ENCODE measurements at regions of chr3 and their contacts with region 1.

Region 1: GRCh38 chr3:183099026-183099837 is at the start of gene MCCC1:
- DNase-seq: peak; percentile 99
- ATAC-seq: peak; percentile 99
- H3K4me3 Mint-ChIP-seq: peak within 1 kb of the TSS; percentile 91
- H3K27ac Mint-ChIP-seq: peak within 1 kb of the TSS; percentile 99
- H3K4me1 Mint-ChIP-seq: peaks cover 33% of the 10 kb centered on the region
- H3K27me3 Mint-ChIP-seq: no peaks in the 10 kb centered on the region
- total RNA-seq, gene MCCC1: 22.0 to 31.1 TPM

Region 2: GRCh38 chr3:182980204-182981037 is 118.8 kb before region 1 on chr3 and contains the start of gene DCUN1D1:
- CTCF ChIA-PET with region 1: no interaction called
- POLR2A ChIA-PET with region 1: interaction called, 4 read pairs
- intact Hi-C with region 1: loop called (anchors 1 kb)
- DNase-seq: peak; percentile 93
- ATAC-seq: peak; percentile 94
- H3K4me3 Mint-ChIP-seq: peak within 1 kb of the TSS; percentile 95
- H3K27ac Mint-ChIP-seq: peak within 1 kb of the TSS; percentile 92
- H3K4me1 Mint-ChIP-seq: peaks cover 25% of the 10 kb centered on the region
- H3K27me3 Mint-ChIP-seq: no peaks in the 10 kb centered on the region
- total RNA-seq, gene DCUN1D1: 40.0 to 52.9 TPM

Region 3: DNA sequence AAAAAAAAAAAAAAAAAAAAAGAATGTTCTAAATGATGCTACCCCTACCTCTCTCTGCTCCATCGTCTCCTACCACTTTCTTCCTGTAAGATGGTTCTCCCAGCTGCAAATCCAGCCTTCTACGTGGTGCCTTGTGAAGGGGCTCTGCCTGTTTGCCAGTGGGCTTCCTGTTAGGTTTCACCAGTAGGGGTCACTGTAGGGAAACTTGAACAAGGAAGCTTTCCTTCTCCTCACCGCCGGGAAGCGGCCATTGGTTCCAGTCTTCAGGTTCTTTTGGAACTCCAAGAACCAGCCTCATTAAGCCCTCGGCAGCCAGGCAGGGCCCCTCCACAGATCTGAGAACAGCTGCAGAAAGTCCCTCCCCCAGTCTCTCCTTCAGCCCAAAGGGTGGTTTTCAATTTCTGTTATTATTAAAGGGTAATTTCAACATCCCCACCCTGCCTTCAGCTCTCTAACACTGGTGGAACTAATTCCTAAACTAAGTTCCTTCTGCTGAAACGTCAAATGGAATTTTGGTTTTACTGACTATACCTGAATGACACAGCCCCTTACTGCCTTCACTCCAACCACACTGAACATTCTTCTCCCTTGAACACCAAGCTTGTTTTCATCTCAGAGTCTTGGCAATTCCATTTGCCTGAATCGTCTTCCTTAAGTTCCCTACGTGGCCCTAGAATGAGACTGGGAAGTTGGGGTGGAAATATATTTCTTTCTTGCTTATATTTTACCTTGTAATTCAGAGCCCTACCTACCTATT is 13.4 kb before region 1 on chr3:
- CTCF ChIA-PET with region 1: interaction called, 38 read pairs
- POLR2A ChIA-PET with region 1: interaction called, 8 read pairs
- intact Hi-C with region 1: no loop called
- DNase-seq: peak; percentile 22
- ATAC-seq: no peak
- H3K4me3 Mint-ChIP-seq: no peak overlapping the region
- H3K27ac Mint-ChIP-seq: no peak overlapping the region
- H3K4me1 Mint-ChIP-seq: no peaks in the 10 kb centered on the region
- H3K27me3 Mint-ChIP-seq: no peaks in the 10 kb centered on the region

Region 4: DNA sequence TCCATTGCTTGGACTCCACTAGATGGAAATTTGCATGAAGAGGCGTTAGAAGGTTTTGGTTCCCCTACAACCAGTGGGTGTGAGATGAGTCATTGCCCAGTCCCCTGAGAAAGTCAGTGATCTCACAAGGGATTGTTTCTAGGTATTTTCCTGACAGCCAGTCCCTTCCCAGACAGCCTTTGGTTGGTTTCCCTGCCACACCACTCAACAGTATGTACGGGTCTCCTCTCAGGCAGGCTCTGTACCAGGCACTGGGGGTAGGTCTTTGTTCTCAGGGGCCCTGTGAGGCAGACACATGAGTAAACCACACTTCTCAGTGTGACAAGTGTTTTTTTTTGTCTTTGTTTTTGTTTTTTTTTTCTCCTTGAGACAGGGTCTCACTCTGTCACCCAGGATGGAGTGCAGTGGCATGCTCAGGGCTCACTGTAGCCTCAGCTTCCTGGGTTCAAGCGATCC is 59.3 kb after region 1 on chr3:
- CTCF ChIA-PET with region 1: no interaction called
- POLR2A ChIA-PET with region 1: no interaction called
- intact Hi-C with region 1: loop called in 1 of 2 experiments (anchors 1 kb)
- DNase-seq: peak; percentile 68
- ATAC-seq: peak; percentile 64
- H3K4me3 Mint-ChIP-seq: no peak overlapping the region
- H3K27ac Mint-ChIP-seq: peak overlapping the region; percentile 62
- H3K4me1 Mint-ChIP-seq: peaks cover 34% of the 10 kb centered on the region
- H3K27me3 Mint-ChIP-seq: no peaks in the 10 kb centered on the region

Region 5: GRCh38 chr3:183427876-183428446 is 328.7 kb after region 1 on chr3:
- CTCF ChIA-PET with region 1: no interaction called
- POLR2A ChIA-PET with region 1: no interaction called
- intact Hi-C with region 1: loop called in 1 of 2 experiments (anchors 1 kb)
- DNase-seq: peak; percentile 57
- ATAC-seq: peak; percentile 21
- H3K4me3 Mint-ChIP-seq: peak overlapping the region; percentile 79
- H3K27ac Mint-ChIP-seq: no peak overlapping the region
- H3K4me1 Mint-ChIP-seq: peaks cover 43% of the 10 kb centered on the region
- H3K27me3 Mint-ChIP-seq: peaks cover 11% of the 10 kb centered on the region

Region 6: GRCh38 chr3:183697610-183698317 is 598.5 kb after region 1 on chr3 and contains the start of gene YEATS2:
- CTCF ChIA-PET with region 1: no interaction called
- POLR2A ChIA-PET with region 1: no interaction called
- intact Hi-C with region 1: loop called in 1 of 2 experiments (anchors 1 kb)
- DNase-seq: peak; percentile 91
- ATAC-seq: peak; percentile 81
- H3K4me3 Mint-ChIP-seq: peak within 1 kb of the TSS; percentile 91
- H3K27ac Mint-ChIP-seq: peak within 1 kb of the TSS; percentile 89
- H3K4me1 Mint-ChIP-seq: peaks cover 31% of the 10 kb centered on the region
- H3K27me3 Mint-ChIP-seq: no peaks in the 10 kb centered on the region
- total RNA-seq, gene YEATS2: 59.4 to 73.9 TPM